Endothelial cell of umbilical vein (primary cell): ENCODE measurements at regions of chr3 and their contacts with region 1.

Region 1: GRCh38 chr3:57951066-57951882 is 56.9 kb upstream of the FLNB start:
- DNase-seq: peak; percentile 95
- H3K4me3 ChIP-seq: peak overlapping the region in 1 of 3 experiments; percentile 6
- H3K27ac ChIP-seq: peak overlapping the region; percentile 98
- H3K4me1 ChIP-seq: peaks cover 43% of the 10 kb centered on the region
- H3K27me3 ChIP-seq: no peaks in the 10 kb centered on the region
- CTCF ChIP-seq: no peak
- POLR2A ChIP-seq: no peak

Region 2: DNA sequence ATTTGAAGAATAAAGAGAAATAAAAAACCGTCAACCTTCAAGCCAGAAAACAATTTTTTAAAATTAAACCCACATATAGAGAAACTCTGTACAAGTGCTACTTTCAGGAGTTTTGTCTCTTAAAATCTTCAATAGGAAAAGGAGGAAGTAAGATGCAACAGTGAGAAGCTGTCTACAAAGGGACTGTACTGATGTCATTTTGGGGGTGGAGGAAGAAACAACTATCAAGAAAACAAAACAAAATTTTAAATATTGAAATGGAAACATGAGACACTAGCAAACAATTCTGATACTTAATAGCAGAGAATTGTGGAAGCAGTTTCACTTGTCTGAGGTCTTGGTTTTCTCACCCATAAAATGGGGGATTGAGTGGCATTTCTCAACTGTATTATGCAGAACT is 110.8 kb before region 1 on chr3:
- CTCF ChIA-PET with region 1: no interaction called
- POLR2A ChIA-PET with region 1: no interaction called
- dilution Hi-C with region 1: no loop called
- intact Hi-C with region 1: no loop called
- DNase-seq: no peak
- H3K4me3 ChIP-seq: no peak overlapping the region
- H3K27ac ChIP-seq: no peak overlapping the region
- H3K4me1 ChIP-seq: no peaks in the 10 kb centered on the region
- H3K27me3 ChIP-seq: no peaks in the 10 kb centered on the region
- CTCF ChIP-seq: no peak
- POLR2A ChIP-seq: no peak

Region 3: DNA sequence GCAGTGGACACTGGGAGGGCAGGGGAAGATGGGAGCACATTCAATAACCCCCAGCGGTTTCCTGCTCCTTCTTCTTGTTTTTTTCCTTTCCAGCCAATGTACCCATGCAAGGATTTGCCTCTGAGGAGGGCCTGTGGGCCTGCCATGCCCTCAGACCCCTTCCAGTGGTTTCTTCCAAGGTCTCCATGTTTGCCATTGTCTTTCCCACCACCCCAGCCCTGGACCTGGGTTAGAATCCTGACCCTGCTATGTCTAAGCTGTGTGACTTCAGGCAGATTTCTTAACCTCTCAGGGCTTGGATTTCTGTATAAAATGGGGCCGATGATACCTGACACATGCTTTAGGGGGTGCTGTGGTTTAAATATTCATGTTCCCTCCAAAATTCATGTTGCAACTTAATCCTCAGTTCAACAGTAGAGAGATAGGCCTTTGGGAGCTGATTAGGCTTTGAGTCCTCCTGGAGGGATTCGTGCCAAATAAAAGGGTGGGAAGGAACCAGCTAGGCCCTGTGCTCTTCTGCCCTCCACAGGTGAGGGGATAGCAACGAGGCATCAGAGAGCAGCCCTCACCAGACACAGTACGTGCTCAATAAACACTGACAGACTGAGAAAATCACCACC is 10.7 kb after region 1 on chr3:
- CTCF ChIA-PET with region 1: interaction called, 11 read pairs
- POLR2A ChIA-PET with region 1: no interaction called
- dilution Hi-C with region 1: no loop called
- intact Hi-C with region 1: no loop called
- DNase-seq: peak; percentile 58
- H3K4me3 ChIP-seq: no peak overlapping the region
- H3K27ac ChIP-seq: no peak overlapping the region
- H3K4me1 ChIP-seq: peaks cover 17% of the 10 kb centered on the region
- H3K27me3 ChIP-seq: no peaks in the 10 kb centered on the region
- CTCF ChIP-seq: peak; percentile 30 to 65
- POLR2A ChIP-seq: no peak

Region 4: GRCh38 chr3:58041654-58042324 is 90.5 kb after region 1 on chr3:
- CTCF ChIA-PET with region 1: no interaction called
- POLR2A ChIA-PET with region 1: no interaction called
- dilution Hi-C with region 1: loop called (anchors 25 kb)
- intact Hi-C with region 1: no loop called
- DNase-seq: peak; percentile 54
- H3K4me3 ChIP-seq: no peak overlapping the region
- H3K27ac ChIP-seq: peak overlapping the region; percentile 67
- H3K4me1 ChIP-seq: peaks cover 69% of the 10 kb centered on the region
- H3K27me3 ChIP-seq: no peaks in the 10 kb centered on the region
- CTCF ChIP-seq: no peak
- POLR2A ChIP-seq: no peak

Region 5: DNA sequence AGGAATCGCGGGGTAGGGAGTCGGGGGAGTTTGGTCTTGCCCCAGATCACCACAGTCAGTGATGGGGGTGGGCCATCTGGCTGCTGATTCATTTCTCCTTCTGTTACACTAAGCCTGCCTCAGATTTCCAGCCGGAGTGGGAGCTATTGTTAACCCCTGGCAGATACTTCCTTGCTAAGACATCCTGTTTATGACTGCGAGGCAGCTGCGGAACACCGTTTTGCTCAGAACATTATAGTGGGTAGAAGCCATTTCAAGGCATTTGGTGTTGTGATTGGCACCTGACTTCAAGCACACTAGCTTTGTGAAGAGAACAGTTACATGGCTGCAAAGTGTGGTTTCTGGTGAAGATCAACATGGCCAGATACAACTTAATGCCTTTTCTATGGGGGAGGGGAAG is 130.8 kb after region 1 on chr3:
- CTCF ChIA-PET with region 1: interaction called, 3 read pairs
- POLR2A ChIA-PET with region 1: no interaction called
- dilution Hi-C with region 1: no loop called
- intact Hi-C with region 1: loop called (anchors 1 kb)
- DNase-seq: peak; percentile 99
- H3K4me3 ChIP-seq: no peak overlapping the region
- H3K27ac ChIP-seq: peak overlapping the region; percentile 93
- H3K4me1 ChIP-seq: peaks cover 62% of the 10 kb centered on the region
- H3K27me3 ChIP-seq: no peaks in the 10 kb centered on the region
- CTCF ChIP-seq: no peak
- POLR2A ChIP-seq: peak; percentile 47

Region 6: GRCh38 chr3:58177747-58178527 is 226.7 kb after region 1 on chr3:
- CTCF ChIA-PET with region 1: interaction called, 3 read pairs
- POLR2A ChIA-PET with region 1: no interaction called
- dilution Hi-C with region 1: no loop called
- intact Hi-C with region 1: loop called (anchors 5 kb)
- DNase-seq: peak; percentile 79
- H3K4me3 ChIP-seq: peak overlapping the region in 2 of 3 experiments; percentile 8 to 22
- H3K27ac ChIP-seq: no peak overlapping the region
- H3K4me1 ChIP-seq: peaks cover 34% of the 10 kb centered on the region
- H3K27me3 ChIP-seq: no peaks in the 10 kb centered on the region
- CTCF ChIP-seq: peak; percentile 89 to 97
- POLR2A ChIP-seq: peak; percentile 36